ENCODE measurements at regions of chr5 and their contacts with region 1.

Region 1: DNA sequence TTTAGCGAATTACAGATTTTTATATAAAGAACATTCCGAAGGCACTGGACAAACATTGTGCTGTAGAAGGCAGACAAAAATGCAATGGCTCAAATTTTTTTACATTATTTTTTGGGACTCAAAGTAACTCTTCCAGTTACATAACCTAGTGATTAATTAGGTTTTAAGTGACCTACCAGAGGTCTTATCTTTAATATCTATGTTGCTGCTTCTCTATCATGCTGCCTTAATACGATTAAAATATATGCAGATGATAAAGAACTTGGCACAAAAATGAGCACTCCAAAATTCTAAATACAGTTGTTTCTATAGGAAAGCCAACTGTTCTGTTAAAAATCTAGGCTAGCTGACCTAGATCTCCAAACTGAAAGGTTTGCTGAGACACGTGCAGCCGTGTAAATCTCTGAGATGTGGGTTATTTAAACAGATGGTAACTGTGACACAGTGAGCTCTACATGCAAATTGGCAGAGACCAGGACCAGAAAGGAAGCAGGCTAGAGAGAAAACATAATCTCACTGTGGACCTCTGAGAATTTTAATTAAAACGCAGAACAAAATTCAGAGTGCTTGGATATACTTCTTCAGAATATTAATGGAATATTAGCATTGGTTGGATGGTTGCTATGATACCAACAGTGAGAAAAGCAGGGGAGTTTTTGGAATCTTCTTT is 56.2 kb downstream of the CAMK4 start:
- DNase-seq: no peak
- H3K4me3 ChIP-seq: no peak overlapping the region
- H3K27ac ChIP-seq: no peak overlapping the region
- H3K4me1 ChIP-seq: peaks cover 0 to 4% of the 10 kb centered on the region in 2 donors
- H3K27me3 ChIP-seq: no peaks in the 10 kb centered on the region
- CTCF ChIP-seq: no peak
- POLR2A ChIP-seq: no peak

Region 2: DNA sequence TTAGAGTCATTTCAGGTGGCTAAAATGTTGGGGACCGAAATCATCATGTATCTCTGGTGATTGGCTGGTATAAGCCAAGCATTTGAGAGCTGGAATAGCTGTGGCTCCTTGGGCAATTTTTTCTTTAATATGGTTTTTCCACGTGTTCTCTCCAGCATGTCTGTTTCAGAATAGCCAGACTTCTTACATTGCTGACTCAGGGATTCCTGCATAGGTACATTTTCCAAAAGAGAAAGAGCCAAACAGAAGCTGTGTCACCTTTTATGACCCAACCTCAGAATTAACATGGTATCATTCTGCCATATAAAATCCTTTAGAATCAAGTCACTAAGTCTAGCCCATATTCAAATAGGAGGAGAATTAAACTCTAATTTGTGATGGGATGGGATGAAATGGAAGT is 283.7 kb before region 1 on chr5:
- intact Hi-C with region 1: no loop called
- DNase-seq: no peak
- H3K4me3 ChIP-seq: no peak overlapping the region
- H3K27ac ChIP-seq: no peak overlapping the region
- H3K4me1 ChIP-seq: no peaks in the 10 kb centered on the region
- H3K27me3 ChIP-seq: no peaks in the 10 kb centered on the region
- CTCF ChIP-seq: no peak
- POLR2A ChIP-seq: no peak

Region 3: DNA sequence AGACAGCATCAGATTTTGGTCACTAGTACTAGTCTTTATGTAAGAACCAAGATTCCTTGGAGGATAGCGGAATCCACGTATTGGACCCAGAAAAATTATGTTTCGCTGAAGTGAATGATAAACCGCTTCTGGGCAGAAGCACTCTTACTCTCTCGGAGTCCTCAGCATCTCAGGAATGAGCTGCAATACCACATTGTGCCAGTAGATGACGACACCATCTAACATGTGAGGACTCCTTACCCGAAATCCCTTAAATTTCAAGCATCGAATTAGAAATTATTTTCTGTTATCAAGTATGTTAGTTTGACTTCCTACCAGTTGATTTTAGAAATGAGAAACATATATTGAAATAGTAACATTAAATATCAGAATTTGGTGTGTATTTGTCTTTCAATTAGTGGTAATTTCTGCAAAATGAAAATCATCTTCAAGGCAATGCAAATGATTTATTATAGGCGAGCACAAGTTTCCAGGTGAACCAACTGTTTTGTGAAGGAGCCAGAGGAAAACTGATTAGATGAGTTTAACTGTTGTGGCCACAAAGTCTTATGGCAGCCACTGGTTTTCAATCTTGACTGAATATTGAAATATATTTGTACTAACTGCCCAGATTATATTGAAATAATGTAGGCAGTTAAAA is 122.2 kb before region 1 on chr5:
- intact Hi-C with region 1: loop called (anchors 5 to 10 kb)
- DNase-seq: peak; percentile 66 to 94 (median 77)
- H3K4me3 ChIP-seq: no peak overlapping the region
- H3K27ac ChIP-seq: no peak overlapping the region
- H3K4me1 ChIP-seq: peaks cover 0 to 5% of the 10 kb centered on the region in 2 donors
- H3K27me3 ChIP-seq: no peaks in the 10 kb centered on the region
- CTCF ChIP-seq: peak; percentile 95 to 100 (median 99)
- POLR2A ChIP-seq: no peak

Region 4: DNA sequence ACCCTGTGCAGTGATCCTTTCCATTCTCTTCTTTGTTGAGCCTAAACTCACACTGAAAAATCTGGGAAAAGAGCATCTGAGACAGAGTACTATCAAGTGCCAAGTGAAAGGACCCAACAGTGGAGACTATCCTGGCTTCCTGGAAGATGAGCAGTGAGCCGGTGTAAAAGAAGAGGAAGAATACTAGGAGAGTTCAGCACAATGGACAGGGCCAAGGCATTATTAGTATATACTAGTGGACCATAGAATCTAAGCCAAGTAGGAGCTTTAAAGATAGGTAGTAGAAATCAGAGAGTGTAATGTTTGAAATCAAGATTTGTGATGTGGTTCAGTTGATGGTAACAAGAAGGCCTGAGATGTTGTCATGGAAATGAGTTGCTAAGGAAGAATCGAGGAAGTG is 84.6 kb after region 1 on chr5:
- intact Hi-C with region 1: no loop called
- DNase-seq: no peak
- H3K4me3 ChIP-seq: no peak overlapping the region
- H3K27ac ChIP-seq: no peak overlapping the region
- H3K4me1 ChIP-seq: no peaks in the 10 kb centered on the region
- H3K27me3 ChIP-seq: no peaks in the 10 kb centered on the region
- CTCF ChIP-seq: no peak
- POLR2A ChIP-seq: no peak